ENCODE measurements at regions of chr17 and their contacts with region 1.

Region 1: DNA sequence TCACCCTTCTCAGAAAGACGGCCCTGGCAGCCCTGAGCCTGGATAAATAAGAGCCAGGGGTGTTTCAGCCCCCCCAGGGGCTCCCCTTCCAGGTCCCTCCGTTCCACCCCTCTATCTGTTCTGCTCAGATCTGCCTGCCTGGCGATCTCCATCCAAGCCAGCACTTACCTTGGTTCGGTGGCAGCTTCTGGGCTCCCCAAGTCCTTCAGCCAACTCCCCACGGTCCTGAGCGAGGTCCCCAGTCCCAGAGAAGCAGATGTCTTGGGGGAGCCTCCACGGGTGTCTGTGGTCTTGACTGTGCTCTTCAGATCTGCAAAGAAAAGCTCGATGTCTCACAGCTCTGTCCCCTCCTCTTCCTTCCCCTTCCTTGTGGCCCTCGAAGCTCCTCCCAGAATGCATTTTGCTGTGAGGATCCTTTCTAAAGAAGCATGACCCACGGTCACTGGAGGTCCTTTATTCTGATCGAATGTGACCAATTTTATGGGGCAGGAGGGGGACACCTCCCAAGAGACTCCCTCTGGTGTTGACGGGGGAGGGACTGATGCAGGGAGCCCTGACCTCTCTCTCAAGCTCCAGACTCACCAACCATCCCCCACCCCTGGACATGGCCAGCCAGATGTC is at the start of gene PIK3R6:
- DNase-seq: no peak
- ATAC-seq: peak; percentile 65
- H3K4me3 ChIP-seq: peak within 1 kb of the TSS; percentile 99
- H3K27ac ChIP-seq: peak within 1 kb of the TSS; percentile 88
- H3K4me1 ChIP-seq: peaks cover 25% of the 10 kb centered on the region
- H3K27me3 ChIP-seq: no peaks in the 10 kb centered on the region
- CTCF ChIP-seq: no peak
- EP300 ChIP-seq: no peak
- POLR2A ChIP-seq: peak; percentile 83
- RAD21 ChIP-seq: no peak
- polyA plus RNA-seq, gene PIK3R6: 6.7 to 7.4 TPM

Region 2: DNA sequence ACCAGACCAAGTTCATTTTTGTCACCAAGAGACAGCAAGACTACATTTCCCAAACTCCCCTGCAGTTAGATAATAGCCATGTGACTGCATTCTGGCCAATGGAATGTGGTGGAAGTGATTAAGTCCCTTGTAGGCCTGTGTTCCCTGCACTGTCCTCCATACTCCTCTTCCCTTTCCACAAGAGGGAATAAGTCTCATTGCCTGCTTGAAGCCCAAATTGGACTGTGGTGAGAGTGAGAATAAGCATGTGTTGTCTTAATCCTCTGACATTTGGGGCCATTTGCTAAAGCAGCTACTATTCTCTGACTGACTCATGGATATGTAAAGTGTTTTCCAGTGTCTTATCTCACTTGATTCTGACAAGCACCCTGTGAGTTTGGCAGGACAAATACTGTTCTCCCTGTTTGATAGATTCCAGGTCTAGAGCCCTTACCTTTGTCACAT is 20.7 kb before region 1 on chr17:
- CTCF ChIA-PET with region 1: interaction called, 4 read pairs
- POLR2A ChIA-PET with region 1: interaction called, 21 read pairs
- RAD21 ChIA-PET with region 1: interaction called, 20 read pairs
- SMC1A ChIA-PET with region 1: interaction called, 20 read pairs
- in situ Hi-C with region 1: no loop called
- intact Hi-C with region 1: no loop called
- DNase-seq: no peak
- ATAC-seq: peak; percentile 65
- H3K4me3 ChIP-seq: no peak overlapping the region
- H3K27ac ChIP-seq: peak overlapping the region; percentile 42
- H3K4me1 ChIP-seq: peaks cover 42% of the 10 kb centered on the region
- H3K27me3 ChIP-seq: no peaks in the 10 kb centered on the region
- CTCF ChIP-seq: no peak
- EP300 ChIP-seq: no peak
- POLR2A ChIP-seq: no peak
- RAD21 ChIP-seq: no peak

Region 3: DNA sequence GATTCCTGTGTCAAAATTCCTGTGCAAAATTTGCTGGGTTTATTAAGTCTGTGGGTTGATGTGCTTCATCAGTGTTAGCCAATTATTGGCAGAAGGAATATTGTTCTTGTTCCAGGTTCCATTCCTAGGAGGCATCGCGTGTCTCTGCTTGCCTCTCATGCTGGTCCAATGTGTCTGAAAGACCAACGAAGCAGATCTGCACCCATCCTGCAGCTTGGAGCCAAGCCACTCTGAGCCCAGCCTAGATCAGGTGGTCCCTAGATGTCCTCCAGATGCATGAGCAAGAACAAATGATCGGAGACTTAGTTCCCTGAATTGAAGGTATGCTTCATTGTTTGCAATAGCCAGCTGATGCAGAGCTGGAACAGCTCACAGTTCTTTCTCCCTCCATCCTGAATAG is 10.5 kb after region 1 on chr17:
- CTCF ChIA-PET with region 1: interaction called, 4 read pairs
- POLR2A ChIA-PET with region 1: interaction called, 7 read pairs
- RAD21 ChIA-PET with region 1: interaction called, 5 read pairs
- SMC1A ChIA-PET with region 1: interaction called, 11 read pairs
- in situ Hi-C with region 1: no loop called
- intact Hi-C with region 1: no loop called
- DNase-seq: no peak
- ATAC-seq: no peak
- H3K4me3 ChIP-seq: no peak overlapping the region
- H3K27ac ChIP-seq: no peak overlapping the region
- H3K4me1 ChIP-seq: peaks cover 3% of the 10 kb centered on the region; the same call in 1 of the 2 replicates
- H3K27me3 ChIP-seq: no peaks in the 10 kb centered on the region
- CTCF ChIP-seq: no peak
- EP300 ChIP-seq: no peak
- POLR2A ChIP-seq: no peak
- RAD21 ChIP-seq: no peak

Region 4: DNA sequence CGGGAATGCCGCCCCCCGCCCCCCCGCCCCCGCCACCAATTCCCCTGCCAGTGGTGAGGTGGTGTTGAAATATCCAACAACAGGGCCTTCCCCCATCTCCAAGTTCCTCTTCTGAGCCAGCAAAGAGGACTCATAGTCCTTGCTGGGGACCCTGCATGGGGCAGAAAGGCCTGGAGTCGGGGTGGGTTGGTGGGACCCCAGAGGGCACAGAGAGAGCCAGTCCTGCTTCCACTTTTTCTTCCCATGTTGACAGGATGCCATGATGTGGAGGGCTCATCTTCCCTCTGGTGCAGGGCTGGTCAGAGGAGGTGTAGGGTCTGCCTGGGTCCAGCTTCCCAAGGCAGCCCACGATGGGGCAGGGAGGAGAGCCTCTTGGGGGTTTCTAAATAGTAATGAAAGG is 49.0 kb after region 1 on chr17:
- CTCF ChIA-PET with region 1: no interaction called
- POLR2A ChIA-PET with region 1: interaction called, 11 read pairs
- RAD21 ChIA-PET with region 1: interaction called, 4 read pairs
- SMC1A ChIA-PET with region 1: no interaction called
- in situ Hi-C with region 1: no loop called
- intact Hi-C with region 1: no loop called
- DNase-seq: no peak
- ATAC-seq: no peak
- H3K4me3 ChIP-seq: no peak overlapping the region
- H3K27ac ChIP-seq: no peak overlapping the region
- H3K4me1 ChIP-seq: peaks cover 49% of the 10 kb centered on the region
- H3K27me3 ChIP-seq: no peaks in the 10 kb centered on the region
- CTCF ChIP-seq: no peak
- EP300 ChIP-seq: no peak
- POLR2A ChIP-seq: no peak
- RAD21 ChIP-seq: no peak

Measured in GM12878 (cell line).